Activated CD4-positive, alpha-beta T cell treated with anti-CD3 and anti-CD28 coated beads, Interleukin-2, amount 10 ng/mL, durations not matched to agents 24 days and 14 days (primary cell): ENCODE measurements at regions of chr6 and their contacts with region 1.

Region 1: DNA sequence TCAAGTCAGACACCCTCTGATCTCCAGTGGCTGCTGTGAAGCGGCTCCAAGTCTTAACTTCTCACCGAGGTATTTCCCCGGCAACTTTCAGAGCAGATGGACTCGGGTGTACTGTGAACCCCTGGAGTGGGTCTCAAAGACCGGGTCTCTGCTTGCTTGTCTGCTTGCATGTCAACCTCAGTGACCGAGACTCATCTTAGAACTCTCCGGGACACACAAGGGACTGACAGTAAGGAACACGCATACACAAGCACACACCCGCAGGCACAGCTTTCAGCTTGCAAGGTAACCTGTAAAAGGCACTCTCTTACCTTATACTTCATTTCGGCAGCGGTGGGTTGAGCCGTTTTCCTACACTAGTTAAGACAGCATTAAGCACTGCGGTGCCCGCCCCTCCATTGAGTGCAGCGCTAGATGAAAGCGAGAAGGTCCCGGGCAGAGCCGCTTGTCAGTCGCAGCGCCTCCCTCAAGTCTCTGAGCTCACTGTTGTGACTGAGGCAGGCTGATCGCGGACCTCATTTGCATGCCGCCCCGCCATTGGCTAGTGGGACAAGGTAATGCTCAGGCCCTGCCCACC is at the start of gene NEDD9:
- DNase-seq: peak; percentile 98
- H3K4me3 Mint-ChIP-seq: peak within 1 kb of the TSS; percentile 85
- H3K27ac Mint-ChIP-seq: peak within 1 kb of the TSS; percentile 97
- H3K4me1 Mint-ChIP-seq: peaks cover 64% of the 10 kb centered on the region
- H3K27me3 Mint-ChIP-seq: no peaks in the 10 kb centered on the region
- total RNA-seq, gene NEDD9: 31.9 and 36.9 TPM in 2 replicates

Region 2: GRCh38 chr6:11093589-11094410 is 138.5 kb before region 1 on chr6 and contains the start of gene SMIM13:
- intact Hi-C with region 1: loop called (anchors 5 kb)
- DNase-seq: peak; percentile 99
- H3K4me3 Mint-ChIP-seq: peak within 1 kb of the TSS; percentile 92
- H3K27ac Mint-ChIP-seq: peak within 1 kb of the TSS; percentile 95
- H3K4me1 Mint-ChIP-seq: peaks cover 26% of the 10 kb centered on the region
- H3K27me3 Mint-ChIP-seq: peaks cover 2% of the 10 kb centered on the region
- total RNA-seq, gene SMIM13: 15.2 and 15.6 TPM in 2 replicates

Region 3: DNA sequence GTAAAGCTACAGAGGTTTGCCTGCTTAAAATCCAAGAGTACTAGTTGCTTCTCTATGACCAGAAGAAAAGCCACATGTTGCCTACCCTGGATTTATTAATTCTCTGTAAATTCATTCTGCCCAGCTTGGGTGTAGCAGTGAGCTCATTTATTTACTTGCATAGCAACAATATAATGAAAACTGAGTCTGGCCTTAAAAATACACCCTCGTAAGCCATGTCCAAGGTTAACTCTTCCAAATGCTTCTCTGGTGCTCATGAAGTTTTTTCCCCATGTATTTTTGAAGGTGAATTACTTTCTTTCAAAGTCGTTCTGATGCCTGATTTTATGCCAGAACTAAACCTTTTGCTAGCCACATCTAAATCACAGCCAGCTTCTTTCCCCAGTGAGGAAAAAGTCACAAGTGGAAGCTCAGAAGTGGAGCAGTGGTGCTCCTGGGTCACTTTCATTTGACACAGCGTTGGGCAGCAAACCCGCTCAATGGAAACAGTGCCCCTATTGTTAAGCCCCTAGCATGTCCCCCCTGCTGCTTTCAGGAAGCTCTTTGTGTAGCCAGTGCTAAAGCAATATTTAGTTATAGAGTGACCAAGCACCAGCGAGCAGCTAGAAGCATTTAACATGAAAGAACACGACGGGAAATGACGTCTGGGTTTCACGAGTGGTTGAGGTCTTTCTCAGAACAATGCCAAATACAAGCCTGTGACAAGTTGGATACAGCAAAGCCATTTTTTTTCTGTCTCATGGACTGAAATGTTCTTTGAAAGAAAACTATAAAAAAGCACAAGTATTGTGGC is 29.6 kb before region 1 on chr6:
- intact Hi-C with region 1: loop called (anchors 1 kb)
- DNase-seq: peak; percentile 85
- H3K4me3 Mint-ChIP-seq: peak overlapping the region; percentile 58
- H3K27ac Mint-ChIP-seq: peak overlapping the region; percentile 86
- H3K4me1 Mint-ChIP-seq: peaks cover 72% of the 10 kb centered on the region
- H3K27me3 Mint-ChIP-seq: no peaks in the 10 kb centered on the region

Region 4: GRCh38 chr6:11324453-11325015 is 92.3 kb after region 1 on chr6:
- intact Hi-C with region 1: loop called (anchors 1 kb)
- DNase-seq: peak; percentile 87
- H3K4me3 Mint-ChIP-seq: peak overlapping the region; percentile 78
- H3K27ac Mint-ChIP-seq: peak overlapping the region; percentile 97
- H3K4me1 Mint-ChIP-seq: peaks cover 75% of the 10 kb centered on the region
- H3K27me3 Mint-ChIP-seq: no peaks in the 10 kb centered on the region

Region 5: GRCh38 chr6:11381801-11382513 is 149.7 kb after region 1 on chr6:
- intact Hi-C with region 1: loop called (anchors 5 kb)
- DNase-seq: peak; percentile 92
- H3K4me3 Mint-ChIP-seq: peak overlapping the region; percentile 71
- H3K27ac Mint-ChIP-seq: peak overlapping the region; percentile 87
- H3K4me1 Mint-ChIP-seq: peaks cover 62% of the 10 kb centered on the region
- H3K27me3 Mint-ChIP-seq: peaks cover 1% of the 10 kb centered on the region

Region 6: GRCh38 chr6:11460001-11460668 is 227.9 kb after region 1 on chr6:
- intact Hi-C with region 1: loop called (anchors 1 kb)
- DNase-seq: peak; percentile 66
- H3K4me3 Mint-ChIP-seq: peak overlapping the region; percentile 78
- H3K27ac Mint-ChIP-seq: peak overlapping the region; percentile 95
- H3K4me1 Mint-ChIP-seq: peaks cover 27% of the 10 kb centered on the region
- H3K27me3 Mint-ChIP-seq: no peaks in the 10 kb centered on the region

Region 7: GRCh38 chr6:11711003-11711983 is 479.0 kb after region 1 on chr6:
- intact Hi-C with region 1: loop called (anchors 10 kb)
- DNase-seq: peak; percentile 80
- H3K4me3 Mint-ChIP-seq: peak overlapping the region; percentile 83
- H3K27ac Mint-ChIP-seq: peak overlapping the region; percentile 99
- H3K4me1 Mint-ChIP-seq: peaks cover 71% of the 10 kb centered on the region
- H3K27me3 Mint-ChIP-seq: no peaks in the 10 kb centered on the region